Heart right ventricle (tissue), 16 donors: ENCODE measurements at regions of chr7 and their contacts with region 1.

Region 1: GRCh38 chr7:134690016-134690415 is 43.4 kb downstream of the BPGM start:
- DNase-seq: no peak
- ATAC-seq: peak in 7 of 8 donors; percentile 80 to 92 (median 87)
- H3K4me3 ChIP-seq: peak overlapping the region in 8 of 10 donors; percentile 17 to 48 (median 42)
- H3K27ac ChIP-seq: peak overlapping the region in 8 of 10 donors; percentile 26 to 74 (median 54)
- H3K4me1 ChIP-seq: peaks cover 0 to 34% (median 12%) of the 10 kb centered on the region in 9 donors
- H3K27me3 ChIP-seq: no peaks in the 10 kb centered on the region
- CTCF ChIP-seq: peak; percentile 27 to 84 (median 57)

Region 2: GRCh38 chr7:134570934-134571495 is 119.0 kb before region 1 on chr7:
- intact Hi-C with region 1: no loop called
- DNase-seq: no peak
- ATAC-seq: no peak
- H3K4me3 ChIP-seq: no peak overlapping the region
- H3K27ac ChIP-seq: no peak overlapping the region
- H3K4me1 ChIP-seq: no peaks in the 10 kb centered on the region
- H3K27me3 ChIP-seq: peaks cover 0 to 3% (median 0%) of the 10 kb centered on the region in 7 donors
- CTCF ChIP-seq: no peak

Region 3: DNA sequence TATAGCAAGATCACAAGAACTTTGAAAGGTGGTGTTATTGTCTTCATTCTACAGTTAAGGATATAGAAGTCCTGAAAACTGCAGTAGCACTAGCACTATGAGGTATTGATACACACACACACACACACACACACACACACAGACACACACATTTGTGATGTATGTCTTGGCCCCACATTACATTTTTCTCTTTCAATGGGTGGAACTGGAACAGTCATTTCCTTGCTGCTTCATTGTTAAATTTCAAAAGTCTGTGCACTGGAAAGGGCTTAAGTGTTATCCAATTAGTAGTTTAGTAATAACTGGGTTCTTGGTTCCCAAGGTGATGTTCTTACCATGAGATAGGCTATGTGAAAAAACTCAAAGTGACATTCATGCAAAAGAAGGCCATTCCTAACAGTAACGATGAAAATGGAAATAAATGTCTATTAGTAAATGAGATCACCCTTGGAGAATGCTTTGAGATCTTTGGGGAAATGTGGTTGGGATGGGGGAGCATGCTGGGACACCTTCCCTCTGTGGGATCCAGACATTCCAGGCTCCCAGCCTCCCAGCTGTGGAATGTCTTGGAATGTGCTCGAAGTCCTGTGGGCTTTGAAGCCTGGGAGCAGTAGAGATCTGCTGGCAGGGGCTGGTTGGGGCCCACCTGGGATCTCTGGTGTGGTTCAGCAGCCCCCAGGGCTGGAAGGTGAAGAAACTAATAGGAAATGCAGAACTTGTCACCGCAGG is 52.1 kb after region 1 on chr7:
- intact Hi-C with region 1: loop called in 1 of 10 experiments (anchors 5 kb)
- DNase-seq: peak in 1 of 2 donors; percentile 25
- ATAC-seq: peak in 7 of 8 donors; percentile 42 to 81 (median 59)
- H3K4me3 ChIP-seq: no peak overlapping the region
- H3K27ac ChIP-seq: peak overlapping the region in 9 of 10 donors; percentile 46 to 82 (median 70)
- H3K4me1 ChIP-seq: peaks cover 0 to 31% (median 11%) of the 10 kb centered on the region in 9 donors
- H3K27me3 ChIP-seq: no peaks in the 10 kb centered on the region
- CTCF ChIP-seq: no peak

Region 4: GRCh38 chr7:134755401-134756022 is 65.5 kb after region 1 on chr7:
- intact Hi-C with region 1: loop called in 4 of 10 experiments (anchors 2 to 10 kb)
- DNase-seq: peak; percentile 17 to 30
- ATAC-seq: peak in 1 of 8 donors; percentile 50
- H3K4me3 ChIP-seq: no peak overlapping the region
- H3K27ac ChIP-seq: no peak overlapping the region
- H3K4me1 ChIP-seq: peaks cover 0 to 6% (median 0%) of the 10 kb centered on the region in 9 donors
- H3K27me3 ChIP-seq: no peaks in the 10 kb centered on the region
- CTCF ChIP-seq: peak in 8 of 9 donors; percentile 26 to 77 (median 64)

Region 5: DNA sequence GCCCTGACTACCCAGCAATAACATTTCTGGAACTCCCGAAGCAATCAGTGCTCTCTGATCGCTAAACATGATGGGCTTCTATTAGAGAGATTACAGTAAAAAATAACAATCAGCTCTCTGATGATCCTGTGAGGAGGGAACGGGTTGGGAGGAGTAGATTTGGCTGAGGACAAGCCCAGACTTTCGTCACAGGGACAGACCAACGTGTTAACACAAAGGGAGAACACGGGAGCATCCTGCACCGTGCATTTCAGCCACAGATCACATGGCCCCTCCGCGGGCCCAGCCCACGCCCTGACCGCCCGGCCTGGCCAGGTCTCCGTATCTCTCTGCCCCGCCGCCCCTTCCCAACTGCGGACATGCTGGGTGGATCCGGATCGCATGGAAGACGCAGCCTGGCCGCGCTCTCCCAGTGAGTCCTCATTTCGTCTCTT is 201.3 kb after region 1 on chr7:
- intact Hi-C with region 1: loop called in 1 of 10 experiments (anchors 10 kb)
- DNase-seq: peak; percentile 74 to 90
- ATAC-seq: peak; percentile 89 to 95 (median 92)
- H3K4me3 ChIP-seq: peak overlapping the region; percentile 15 to 64 (median 54)
- H3K27ac ChIP-seq: peak overlapping the region; percentile 71 to 89 (median 84)
- H3K4me1 ChIP-seq: peaks cover 6 to 74% (median 49%) of the 10 kb centered on the region in 9 donors
- H3K27me3 ChIP-seq: peaks cover 0 to 11% (median 0%) of the 10 kb centered on the region in 7 donors
- CTCF ChIP-seq: no peak

Region 6: DNA sequence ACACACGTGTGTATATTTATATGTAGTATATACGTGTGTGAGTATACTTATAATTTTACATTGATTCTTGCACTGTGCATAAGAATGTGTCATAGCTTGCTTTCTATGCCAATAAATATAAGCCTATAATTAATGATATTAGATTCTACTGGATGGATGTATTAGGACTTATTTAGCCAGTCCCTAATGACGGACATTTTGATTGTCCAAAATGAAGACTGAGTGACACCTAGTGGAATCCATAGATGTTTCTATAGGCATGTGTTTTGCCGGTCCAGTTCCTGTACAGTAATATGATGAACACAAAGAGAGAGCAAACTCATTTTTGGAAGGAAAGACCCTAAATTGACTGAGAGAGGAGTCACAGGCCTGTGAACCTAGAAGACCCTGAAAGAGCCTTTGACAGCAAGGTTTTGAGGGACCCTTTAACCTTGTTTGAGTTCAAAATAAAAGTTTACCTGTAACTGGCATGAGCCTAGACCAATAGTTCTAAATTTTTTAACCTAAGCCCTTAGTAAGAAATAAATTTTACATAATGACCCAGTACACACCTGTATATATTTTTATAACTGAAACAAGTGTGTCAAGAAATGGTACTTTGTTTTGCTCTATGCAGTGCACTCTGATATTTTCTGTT is 253.9 kb after region 1 on chr7:
- intact Hi-C with region 1: loop called in 4 of 10 experiments (anchors 5 to 10 kb)
- DNase-seq: no peak
- ATAC-seq: peak in 3 of 8 donors; percentile 53 to 60 (median 56)
- H3K4me3 ChIP-seq: no peak overlapping the region
- H3K27ac ChIP-seq: peak overlapping the region in 2 of 10 donors; percentile 16 to 17
- H3K4me1 ChIP-seq: peaks cover 0 to 22% (median 17%) of the 10 kb centered on the region in 9 donors
- H3K27me3 ChIP-seq: no peaks in the 10 kb centered on the region
- CTCF ChIP-seq: peak in 7 of 9 donors; percentile 34 to 66 (median 51)

Region 7: GRCh38 chr7:135170274-135170997 is 480.4 kb after region 1 on chr7 and contains the start of gene CYREN:
- intact Hi-C with region 1: loop called in 6 of 10 experiments (anchors 5 to 10 kb)
- DNase-seq: peak; percentile 93 to 96
- ATAC-seq: peak; percentile 95 to 97 (median 96)
- H3K4me3 ChIP-seq: peak within 1 kb of the TSS; percentile 71 to 98 (median 74)
- H3K27ac ChIP-seq: peak within 1 kb of the TSS; percentile 90 to 99 (median 96)
- H3K4me1 ChIP-seq: peaks cover 15 to 61% (median 47%) of the 10 kb centered on the region in 9 donors
- H3K27me3 ChIP-seq: no peaks in the 10 kb centered on the region
- CTCF ChIP-seq: peak; percentile 35 to 90 (median 72)
- total RNA-seq, gene CYREN: 16.0 to 33.3 (median 22.6) TPM